Sigmoid colon (tissue), 7 donors: ENCODE measurements at regions of chr11 and their contacts with region 1.

Region 1: GRCh38 chr11:86811637-86812321 is 11.4 kb downstream of the PRSS23 start:
- DNase-seq: no peak
- H3K4me3 ChIP-seq: no peak overlapping the region
- H3K27ac ChIP-seq: peak overlapping the region in 3 of 4 donors; percentile 80 to 92 (median 87)
- H3K4me1 ChIP-seq: peaks cover 0 to 89% (median 78%) of the 10 kb centered on the region in 4 donors
- H3K27me3 ChIP-seq: no peaks in the 10 kb centered on the region
- CTCF ChIP-seq: no peak
- EP300 ChIP-seq: no peak
- POLR2A ChIP-seq: no peak

Region 2: GRCh38 chr11:86629045-86629706 is 182.6 kb before region 1 on chr11:
- intact Hi-C with region 1: loop called (anchors 5 kb)
- DNase-seq: no peak
- H3K4me3 ChIP-seq: no peak overlapping the region
- H3K27ac ChIP-seq: peak overlapping the region; percentile 19 to 81 (median 74)
- H3K4me1 ChIP-seq: peaks cover 0 to 76% (median 51%) of the 10 kb centered on the region in 4 donors
- H3K27me3 ChIP-seq: no peaks in the 10 kb centered on the region
- CTCF ChIP-seq: no peak
- EP300 ChIP-seq: peak in 2 of 4 donors; percentile 9 to 29
- POLR2A ChIP-seq: no peak